Caco-2 (cell line): ENCODE measurements at regions of chr6 and their contacts with region 1.

Region 1: DNA sequence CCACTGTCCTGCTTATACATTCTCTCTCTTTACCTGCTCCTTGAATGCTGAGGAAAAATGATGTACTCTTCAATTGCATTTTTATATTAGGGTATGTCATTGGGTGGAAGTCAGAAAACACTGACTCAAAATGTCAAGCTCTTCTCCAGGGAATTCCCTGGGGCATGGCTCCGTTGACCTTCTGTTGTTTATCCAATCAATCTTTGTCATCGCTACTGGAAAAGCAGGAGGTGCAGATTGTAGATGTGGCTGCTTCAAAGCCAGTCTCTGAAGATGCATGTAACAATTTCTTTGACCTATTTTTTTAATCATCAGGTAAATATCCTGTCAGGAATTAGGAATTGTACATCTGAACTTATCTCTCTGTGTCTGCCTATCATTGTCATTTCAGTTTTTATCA is 63.9 kb upstream of the TENT5A start:
- DNase-seq: peak; percentile 24 to 46
- H3K4me3 ChIP-seq: no peak overlapping the region
- H3K4me3 Mint-ChIP-seq: no peak overlapping the region
- H3K27ac Mint-ChIP-seq: no peak overlapping the region
- H3K4me1 ChIP-seq: peaks cover 24% of the 10 kb centered on the region
- H3K4me1 Mint-ChIP-seq: peaks cover 20% of the 10 kb centered on the region
- H3K27me3 ChIP-seq: no peaks in the 10 kb centered on the region
- H3K27me3 Mint-ChIP-seq: no peaks in the 10 kb centered on the region
- CTCF ChIP-seq: no peak

Region 2: DNA sequence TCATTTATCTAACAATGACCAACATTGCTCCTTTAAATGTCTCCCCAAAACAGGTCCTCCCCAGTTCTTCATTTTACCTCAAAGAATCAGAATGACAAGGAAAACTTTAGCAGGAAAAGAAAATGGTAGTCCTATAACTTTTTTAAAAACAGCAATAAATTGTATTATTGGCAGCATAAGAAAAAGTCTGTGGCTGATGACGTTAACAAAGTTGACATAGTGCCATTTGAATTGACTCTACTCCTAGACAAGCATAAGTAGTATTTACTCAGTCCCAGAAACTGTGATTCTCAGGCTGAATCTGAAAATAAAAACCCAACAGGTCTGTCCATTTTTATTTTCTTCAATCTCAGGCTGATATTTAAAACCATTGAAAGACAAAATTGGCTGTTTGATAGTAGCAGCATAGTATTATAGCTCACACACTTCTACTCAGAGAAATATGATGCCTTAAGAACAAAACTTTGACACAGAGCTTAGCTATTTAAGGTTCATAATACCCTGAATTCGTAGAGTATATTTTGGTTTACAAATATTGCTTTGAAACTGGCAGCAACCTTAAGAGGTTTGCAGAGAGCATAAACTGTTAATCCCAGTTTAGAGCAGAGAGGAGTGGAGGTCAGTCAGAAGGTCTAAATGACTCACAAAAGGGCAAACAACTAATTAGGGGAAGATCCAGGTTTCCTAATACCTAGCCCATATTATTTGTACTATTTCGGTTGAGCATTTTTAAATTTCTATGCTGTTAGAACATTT is 28.9 kb before region 1 on chr6:
- CTCF ChIA-PET with region 1: no interaction called
- POLR2A ChIA-PET with region 1: no interaction called
- intact Hi-C with region 1: loop called (anchors 2 kb)
- DNase-seq: no peak
- H3K4me3 ChIP-seq: no peak overlapping the region
- H3K4me3 Mint-ChIP-seq: no peak overlapping the region
- H3K27ac Mint-ChIP-seq: no peak overlapping the region
- H3K4me1 ChIP-seq: peaks cover 51% of the 10 kb centered on the region
- H3K4me1 Mint-ChIP-seq: peaks cover 35% of the 10 kb centered on the region
- H3K27me3 ChIP-seq: no peaks in the 10 kb centered on the region
- H3K27me3 Mint-ChIP-seq: no peaks in the 10 kb centered on the region
- CTCF ChIP-seq: no peak

Region 3: GRCh38 chr6:81859884-81860283 is 43.5 kb after region 1 on chr6:
- CTCF ChIA-PET with region 1: no interaction called
- POLR2A ChIA-PET with region 1: no interaction called
- intact Hi-C with region 1: no loop called
- DNase-seq: no peak
- H3K4me3 ChIP-seq: no peak overlapping the region
- H3K4me3 Mint-ChIP-seq: no peak overlapping the region
- H3K27ac Mint-ChIP-seq: no peak overlapping the region
- H3K4me1 ChIP-seq: peaks cover 61% of the 10 kb centered on the region
- H3K4me1 Mint-ChIP-seq: peaks cover 34% of the 10 kb centered on the region
- H3K27me3 ChIP-seq: no peaks in the 10 kb centered on the region
- H3K27me3 Mint-ChIP-seq: no peaks in the 10 kb centered on the region
- CTCF ChIP-seq: no peak